Naive thymus-derived CD4-positive, alpha-beta T cell (primary cell): ENCODE measurements at regions of chr4 and their contacts with region 1.

Region 1: DNA sequence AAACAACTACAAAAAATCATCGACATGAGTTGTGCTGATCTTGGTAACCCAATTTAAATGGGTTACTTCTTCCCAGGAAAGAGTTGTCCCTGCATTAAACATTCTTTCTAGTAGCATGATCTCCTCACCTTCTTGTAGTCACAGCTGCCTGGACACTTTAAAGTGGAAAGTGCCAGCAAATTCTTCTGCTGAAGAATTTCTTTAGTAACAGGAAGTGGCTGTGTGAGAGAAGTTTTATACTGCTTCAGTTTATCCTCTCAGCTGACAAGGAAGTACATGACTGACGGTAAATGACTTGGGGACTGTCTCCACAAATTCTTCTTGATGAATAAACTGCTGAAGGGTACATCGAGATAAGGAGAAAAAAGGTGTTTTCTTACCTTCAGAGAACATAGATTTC is 18.2 kb upstream of the TNIP3 start:
- DNase-seq: peak in 7 of 9 donors; percentile 59 to 79 (median 67)
- ATAC-seq: peak; percentile 84
- H3K4me3 ChIP-seq: peak overlapping the region; percentile 54
- H3K4me3 Mint-ChIP-seq: peak overlapping the region; percentile 62 to 89 (median 84)
- H3K27ac ChIP-seq: peak overlapping the region; percentile 94
- H3K27ac Mint-ChIP-seq: peak overlapping the region; percentile 92 to 97 (median 95)
- H3K4me1 ChIP-seq: peaks cover 43 to 52% of the 10 kb centered on the region in 2 donors
- H3K4me1 Mint-ChIP-seq: peaks cover 52 to 93% (median 80%) of the 10 kb centered on the region in 7 donors
- H3K27me3 ChIP-seq: no peaks in the 10 kb centered on the region
- H3K27me3 Mint-ChIP-seq: no peaks in the 10 kb centered on the region

Region 2: DNA sequence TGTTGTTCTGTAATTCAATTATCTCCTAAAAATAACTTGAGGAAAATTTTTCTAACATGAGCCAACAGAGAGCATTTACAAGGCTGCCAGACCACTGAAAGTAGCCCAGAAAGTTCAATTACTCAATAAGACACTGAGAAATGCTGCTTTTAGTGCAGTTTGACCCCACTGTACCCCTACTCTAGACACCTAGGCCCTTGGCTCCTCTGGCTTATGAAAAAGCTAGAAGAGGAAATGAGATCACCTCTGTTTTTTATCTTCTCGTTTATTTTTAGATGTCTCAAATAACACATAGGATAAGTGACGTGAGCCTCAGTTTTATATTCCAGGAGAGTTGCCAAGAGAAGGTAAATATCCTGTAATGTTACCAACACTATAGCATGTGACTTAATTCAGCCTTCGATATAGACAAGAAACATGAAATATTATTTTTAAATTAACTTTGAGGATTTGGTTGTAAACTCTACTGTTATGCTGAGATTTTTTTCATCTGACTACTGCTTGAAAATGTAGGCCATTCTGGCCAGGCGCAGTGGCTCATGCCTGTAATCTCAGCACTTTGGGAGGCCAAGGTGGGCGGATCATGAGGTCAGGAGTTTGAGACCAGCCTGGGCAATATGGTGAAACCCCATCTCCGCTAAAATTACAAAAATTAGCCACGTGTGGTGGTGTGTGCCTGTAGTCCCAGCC is 42.6 kb before region 1 on chr4:
- CTCF ChIA-PET with region 1: no interaction called
- POLR2A ChIA-PET with region 1: interaction called, 3 read pairs
- intact Hi-C with region 1: loop called (anchors 1 to 5 kb)
- DNase-seq: peak in 7 of 9 donors; percentile 40 to 77 (median 70)
- ATAC-seq: peak; percentile 85
- H3K4me3 ChIP-seq: no peak overlapping the region
- H3K4me3 Mint-ChIP-seq: peak overlapping the region; percentile 10 to 75 (median 44)
- H3K27ac ChIP-seq: peak overlapping the region; percentile 62
- H3K27ac Mint-ChIP-seq: peak overlapping the region; percentile 74 to 97 (median 91)
- H3K4me1 ChIP-seq: peaks cover 0 to 29% of the 10 kb centered on the region in 2 donors
- H3K4me1 Mint-ChIP-seq: peaks cover 22 to 65% (median 54%) of the 10 kb centered on the region in 7 donors
- H3K27me3 ChIP-seq: no peaks in the 10 kb centered on the region
- H3K27me3 Mint-ChIP-seq: no peaks in the 10 kb centered on the region

Region 3: GRCh38 chr4:121168446-121169281 is 13.6 kb before region 1 on chr4:
- CTCF ChIA-PET with region 1: no interaction called
- POLR2A ChIA-PET with region 1: interaction called, 14 read pairs
- intact Hi-C with region 1: loop called in 1 of 2 experiments (anchors 1 kb)
- DNase-seq: no peak
- ATAC-seq: peak; percentile 81
- H3K4me3 ChIP-seq: no peak overlapping the region
- H3K4me3 Mint-ChIP-seq: peak overlapping the region in 1 of 10 donors; percentile 6
- H3K27ac ChIP-seq: no peak overlapping the region
- H3K27ac Mint-ChIP-seq: peak overlapping the region in 3 of 9 donors; percentile 31 to 76 (median 56)
- H3K4me1 ChIP-seq: peaks cover 16 to 30% of the 10 kb centered on the region in 2 donors
- H3K4me1 Mint-ChIP-seq: peaks cover 31 to 80% (median 76%) of the 10 kb centered on the region in 7 donors
- H3K27me3 ChIP-seq: no peaks in the 10 kb centered on the region
- H3K27me3 Mint-ChIP-seq: no peaks in the 10 kb centered on the region